ENCODE measurements at regions of chr1 and their contacts with region 1.

Region 1: DNA sequence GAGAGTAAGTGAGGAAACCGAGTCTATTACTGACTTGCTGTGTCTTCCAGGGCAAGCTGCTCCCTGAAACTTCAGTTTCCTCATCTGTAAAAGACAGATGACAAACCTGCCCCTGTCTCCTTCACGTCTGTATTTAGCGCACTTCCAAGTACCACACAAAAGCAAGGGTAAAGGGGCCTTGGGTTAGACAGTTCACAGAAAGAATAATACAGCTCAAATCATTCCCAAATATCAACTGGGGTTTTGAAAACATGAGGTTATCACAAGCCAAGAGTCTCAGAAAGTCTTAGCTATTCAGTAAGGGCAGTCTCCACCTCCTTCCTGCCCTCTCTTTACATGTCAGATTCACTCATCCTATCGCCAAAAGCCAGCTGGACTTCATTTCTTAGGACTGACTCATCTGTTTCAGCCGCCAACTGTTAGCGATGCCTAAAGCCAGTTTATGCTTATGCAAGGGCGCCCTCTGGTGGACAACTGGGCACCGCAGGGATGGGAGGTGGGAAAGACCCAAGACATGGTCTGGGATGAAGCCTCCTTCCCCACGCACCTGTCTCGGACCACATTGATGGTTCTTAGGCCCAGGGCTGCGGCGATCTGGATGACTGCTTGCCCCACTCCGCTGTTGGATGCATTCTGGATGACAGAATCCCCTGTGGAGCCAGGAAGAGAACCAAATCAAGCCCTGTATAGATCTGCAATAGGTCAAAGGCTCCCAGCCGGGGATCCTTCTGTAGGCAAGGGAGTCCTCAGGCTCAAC is 21.1 kb upstream of the SRSF4 start:
- DNase-seq: peak; percentile 47
- ATAC-seq: peak; percentile 100
- H3K4me3 ChIP-seq: no peak overlapping the region
- H3K27ac ChIP-seq: no peak overlapping the region
- H3K4me1 ChIP-seq: peaks cover 3% of the 10 kb centered on the region; the same call in 1 of the 2 replicates
- H3K27me3 ChIP-seq: no peaks in the 10 kb centered on the region
- CTCF ChIP-seq: peak; percentile 93 to 99 (median 97); a peak in 5 of 6 replicates
- EP300 ChIP-seq: no peak
- POLR2A ChIP-seq: no peak
- RAD21 ChIP-seq: peak; percentile 96

Region 2: DNA sequence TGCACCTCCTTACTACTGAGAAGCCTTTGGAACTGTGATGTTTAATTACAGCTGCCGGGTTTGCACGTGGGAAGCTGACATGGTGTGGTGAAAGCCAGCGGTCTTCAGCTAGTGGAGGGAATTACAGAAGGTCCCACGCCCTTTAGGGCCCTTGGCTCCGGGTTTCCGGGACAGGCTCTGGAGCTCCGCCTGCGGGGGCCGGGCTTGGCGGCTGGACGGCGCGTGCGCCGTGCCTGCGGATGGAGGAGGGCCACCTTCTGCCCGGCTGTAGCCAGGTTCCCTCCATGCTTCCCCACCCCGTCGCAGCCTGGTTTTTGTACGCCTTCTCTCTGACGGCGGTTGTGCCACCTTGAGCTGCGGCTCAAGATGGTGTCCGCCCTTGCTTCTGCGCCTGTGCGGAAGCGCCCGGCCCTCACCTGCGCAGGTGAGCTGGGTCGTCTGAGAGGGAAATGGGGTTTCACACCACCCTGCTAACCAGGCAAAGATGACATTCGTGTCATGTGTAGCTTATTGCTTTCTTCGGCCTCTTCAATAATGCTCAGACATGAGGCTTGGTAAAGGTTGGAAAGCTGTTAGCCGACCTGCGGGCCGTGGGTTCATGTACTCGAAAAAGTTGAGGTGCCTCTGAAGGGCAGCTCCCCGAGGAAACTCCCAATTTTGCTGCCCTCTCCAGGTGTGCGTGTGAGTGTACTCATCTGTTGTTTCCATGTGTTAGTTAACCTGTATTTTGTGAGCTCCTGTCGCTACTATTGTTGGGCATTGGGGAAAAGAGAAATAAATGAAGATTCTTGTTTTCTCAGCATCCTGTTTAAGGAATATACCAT is 427.4 kb before region 1 on chr1:
- CTCF ChIA-PET with region 1: interaction called, 8 read pairs
- POLR2A ChIA-PET with region 1: no interaction called
- RAD21 ChIA-PET with region 1: no interaction called
- SMC1A ChIA-PET with region 1: interaction called, 6 read pairs
- in situ Hi-C with region 1: loop called (anchors 5 kb)
- intact Hi-C with region 1: loop called (anchors 10 kb)
- DNase-seq: no peak
- ATAC-seq: peak; percentile 98
- H3K4me3 ChIP-seq: peak overlapping the region; percentile 7; the same call in 1 of the 2 replicates
- H3K27ac ChIP-seq: no peak overlapping the region
- H3K4me1 ChIP-seq: no peaks in the 10 kb centered on the region
- H3K27me3 ChIP-seq: no peaks in the 10 kb centered on the region
- CTCF ChIP-seq: no peak
- EP300 ChIP-seq: no peak
- POLR2A ChIP-seq: peak; percentile 67
- RAD21 ChIP-seq: no peak

Region 3: GRCh38 chr1:28886731-28887418 is 315.9 kb before region 1 on chr1:
- CTCF ChIA-PET with region 1: interaction called, 173 read pairs
- POLR2A ChIA-PET with region 1: interaction called, 9 read pairs
- RAD21 ChIA-PET with region 1: interaction called, 91 read pairs
- SMC1A ChIA-PET with region 1: interaction called, 127 read pairs
- in situ Hi-C with region 1: loop called (anchors 5 kb)
- intact Hi-C with region 1: loop called (anchors 1 kb)
- DNase-seq: peak; percentile 32
- ATAC-seq: peak; percentile 84
- H3K4me3 ChIP-seq: peak overlapping the region; percentile 89
- H3K27ac ChIP-seq: peak overlapping the region; percentile 68
- H3K4me1 ChIP-seq: peaks cover 34% of the 10 kb centered on the region
- H3K27me3 ChIP-seq: no peaks in the 10 kb centered on the region
- CTCF ChIP-seq: no peak
- EP300 ChIP-seq: no peak
- POLR2A ChIP-seq: peak; percentile 85
- RAD21 ChIP-seq: no peak

Region 4: DNA sequence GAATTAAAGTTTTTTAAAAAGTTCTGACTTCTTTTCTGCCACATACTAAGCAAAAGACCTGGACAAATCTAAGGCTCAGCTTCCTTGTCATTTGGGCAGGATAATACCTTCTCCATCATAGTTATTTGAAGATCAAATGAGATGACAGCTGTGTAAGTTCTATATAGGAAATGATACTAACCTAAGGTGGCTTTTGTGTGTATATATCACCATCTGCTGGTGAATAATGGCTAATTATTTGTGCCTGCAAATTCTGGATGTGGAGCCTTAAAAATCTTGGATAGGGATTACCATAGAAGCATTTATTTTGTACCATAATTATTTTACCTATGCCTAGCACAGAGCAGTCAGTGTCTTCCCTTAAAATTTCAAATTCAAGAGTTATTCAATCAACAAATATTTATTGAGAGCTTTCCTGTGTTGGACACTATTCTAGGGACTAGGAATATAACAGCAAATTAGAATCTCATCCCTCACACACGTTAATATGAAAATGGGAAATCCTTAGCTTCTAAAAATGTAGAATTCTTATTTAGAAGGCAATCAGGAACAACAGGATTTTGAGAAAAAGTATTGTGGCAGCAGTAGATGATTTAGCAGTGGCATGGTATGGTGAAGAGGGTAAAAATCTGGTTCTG is 168.8 kb before region 1 on chr1:
- CTCF ChIA-PET with region 1: interaction called, 91 read pairs
- POLR2A ChIA-PET with region 1: no interaction called
- RAD21 ChIA-PET with region 1: interaction called, 46 read pairs
- SMC1A ChIA-PET with region 1: interaction called, 75 read pairs
- in situ Hi-C with region 1: no loop called
- intact Hi-C with region 1: loop called (anchors 5 kb)
- DNase-seq: peak; percentile 11
- ATAC-seq: peak; percentile 61; the same call in 2 of the 3 replicates
- H3K4me3 ChIP-seq: no peak overlapping the region
- H3K27ac ChIP-seq: no peak overlapping the region
- H3K4me1 ChIP-seq: no peaks in the 10 kb centered on the region
- H3K27me3 ChIP-seq: no peaks in the 10 kb centered on the region
- CTCF ChIP-seq: peak; percentile 44 to 74 (median 52); a peak in 4 of 6 replicates
- EP300 ChIP-seq: no peak
- POLR2A ChIP-seq: no peak
- RAD21 ChIP-seq: peak; percentile 93

Region 5: DNA sequence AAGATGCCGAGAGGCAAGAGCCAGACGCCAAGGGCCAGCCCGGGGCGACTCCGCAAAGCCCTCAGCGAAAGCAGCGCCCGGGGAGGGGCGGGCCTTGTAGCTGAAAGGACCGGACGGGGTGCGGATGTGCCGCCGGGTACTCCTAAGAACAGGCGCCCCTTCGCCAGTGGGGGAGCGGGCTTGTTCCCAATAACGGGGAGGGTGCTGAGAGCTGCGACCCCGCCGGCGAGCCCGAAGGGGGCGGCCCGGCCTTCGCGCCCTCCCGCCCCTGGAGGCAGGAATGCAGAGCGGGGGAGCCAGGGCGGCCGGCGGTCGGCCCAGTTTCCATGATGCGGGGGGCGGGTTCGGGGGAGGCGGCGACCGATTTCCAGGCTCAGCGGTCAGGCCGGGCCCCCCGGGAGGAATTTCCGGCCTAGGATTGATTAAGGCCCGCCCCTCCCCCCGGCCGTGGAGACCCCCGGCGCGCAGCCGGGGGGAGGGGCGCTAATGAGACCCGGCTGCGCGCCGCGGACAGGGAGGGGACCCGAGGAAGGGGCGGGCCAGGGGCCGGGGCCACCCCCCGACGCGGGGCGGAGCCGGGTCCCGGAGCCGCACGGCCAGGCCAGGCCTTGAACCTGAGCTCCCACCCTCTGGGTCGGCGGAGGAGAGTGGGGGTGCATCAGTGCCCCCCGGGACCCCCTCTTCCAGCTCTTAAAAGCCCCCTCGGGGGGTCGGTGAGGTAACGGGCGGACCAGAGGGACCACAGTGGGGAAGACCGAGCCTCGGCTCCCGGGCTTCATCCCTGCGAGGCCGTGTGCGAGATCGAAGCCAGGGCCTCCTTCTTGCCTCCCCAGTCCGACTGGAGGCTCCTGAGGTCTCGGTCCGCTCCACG is 78.2 kb before region 1 on chr1:
- CTCF ChIA-PET with region 1: interaction called, 3 read pairs
- POLR2A ChIA-PET with region 1: no interaction called
- RAD21 ChIA-PET with region 1: no interaction called
- SMC1A ChIA-PET with region 1: no interaction called
- in situ Hi-C with region 1: no loop called
- intact Hi-C with region 1: loop called (anchors 5 kb)
- DNase-seq: no peak
- ATAC-seq: peak; percentile 68
- H3K4me3 ChIP-seq: peak overlapping the region; percentile 53
- H3K27ac ChIP-seq: no peak overlapping the region
- H3K4me1 ChIP-seq: no peaks in the 10 kb centered on the region
- H3K27me3 ChIP-seq: peaks cover 6 to 16% of the 10 kb centered on the region in 2 experiments; a peak in 3 of 4 replicates
- CTCF ChIP-seq: no peak
- EP300 ChIP-seq: no peak
- POLR2A ChIP-seq: no peak
- RAD21 ChIP-seq: no peak

Region 6: GRCh38 chr1:29171089-29171488 is 31.7 kb before region 1 on chr1:
- CTCF ChIA-PET with region 1: interaction called, 17 read pairs
- POLR2A ChIA-PET with region 1: no interaction called
- RAD21 ChIA-PET with region 1: interaction called, 5 read pairs
- SMC1A ChIA-PET with region 1: interaction called, 6 read pairs
- in situ Hi-C with region 1: no loop called
- intact Hi-C with region 1: no loop called
- DNase-seq: peak; percentile 20
- ATAC-seq: peak; percentile 64
- H3K4me3 ChIP-seq: peak overlapping the region; percentile 20; the same call in 1 of the 2 replicates
- H3K27ac ChIP-seq: no peak overlapping the region; the same call in 1 of the 2 replicates
- H3K4me1 ChIP-seq: peaks cover 5% of the 10 kb centered on the region; the same call in 1 of the 2 replicates
- H3K27me3 ChIP-seq: no peaks in the 10 kb centered on the region
- CTCF ChIP-seq: no peak
- EP300 ChIP-seq: no peak
- POLR2A ChIP-seq: no peak
- RAD21 ChIP-seq: no peak

Region 7: GRCh38 chr1:29444782-29445729 is 242.3 kb after region 1 on chr1:
- CTCF ChIA-PET with region 1: no interaction called
- POLR2A ChIA-PET with region 1: no interaction called
- RAD21 ChIA-PET with region 1: no interaction called
- SMC1A ChIA-PET with region 1: no interaction called
- in situ Hi-C with region 1: no loop called
- intact Hi-C with region 1: no loop called
- DNase-seq: no peak
- ATAC-seq: no peak
- H3K4me3 ChIP-seq: no peak overlapping the region
- H3K27ac ChIP-seq: no peak overlapping the region
- H3K4me1 ChIP-seq: no peaks in the 10 kb centered on the region
- H3K27me3 ChIP-seq: no peaks in the 10 kb centered on the region; a peak in 2 of 4 replicates
- CTCF ChIP-seq: no peak
- EP300 ChIP-seq: no peak
- POLR2A ChIP-seq: no peak
- RAD21 ChIP-seq: no peak